GM12878 (cell line): ENCODE measurements at regions of chr6 and their contacts with region 1.

Region 1: DNA sequence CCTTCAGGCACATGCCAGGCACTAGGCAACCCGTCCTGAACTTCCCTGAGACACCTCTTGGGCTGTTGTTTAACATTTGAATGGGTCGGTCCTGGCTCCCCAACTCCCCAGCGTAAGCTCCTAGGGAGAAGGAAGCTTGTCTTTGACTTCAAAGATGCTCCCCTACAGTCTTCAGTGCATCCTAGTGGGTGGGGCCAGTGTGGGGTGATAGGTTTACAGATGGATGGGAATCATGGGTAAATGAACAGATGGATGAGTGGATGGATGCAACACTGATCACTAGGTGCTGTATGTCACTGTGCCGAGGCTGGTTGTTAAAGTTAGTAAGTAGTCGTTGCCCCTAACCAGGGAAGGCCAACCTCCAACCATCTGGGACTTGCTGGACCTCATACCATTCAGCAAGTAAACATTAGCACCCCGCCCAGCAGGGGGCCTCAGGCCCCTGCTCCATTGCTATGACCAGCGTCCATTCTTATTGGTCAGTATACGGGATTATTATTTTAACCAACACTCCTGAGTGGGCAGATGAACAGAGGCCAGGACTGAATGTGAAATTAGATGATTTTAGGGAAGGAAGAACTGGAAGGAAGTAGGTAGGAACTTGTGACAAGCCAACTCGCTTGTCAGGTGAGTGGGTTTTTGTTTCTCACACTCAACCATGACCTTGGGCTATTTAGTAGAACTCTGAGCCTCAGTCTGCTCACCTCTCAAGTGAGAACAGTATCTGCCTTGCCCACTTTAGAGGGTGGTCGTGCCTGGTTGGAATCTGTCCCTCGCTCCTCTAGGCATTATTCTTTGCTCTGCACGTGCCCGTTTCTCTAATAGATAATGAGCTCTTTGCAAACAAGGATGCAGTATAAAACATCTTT is 82.9 kb upstream of the FOXP4 start:
- DNase-seq: no peak
- ATAC-seq: peak; percentile 99
- H3K4me3 ChIP-seq: no peak overlapping the region
- H3K27ac ChIP-seq: no peak overlapping the region
- H3K4me1 ChIP-seq: no peaks in the 10 kb centered on the region
- H3K27me3 ChIP-seq: peaks cover 0 to 3% of the 10 kb centered on the region in 2 experiments; a peak in 1 of 4 replicates
- CTCF ChIP-seq: peak; percentile 74 to 82 (median 81)
- EP300 ChIP-seq: no peak
- POLR2A ChIP-seq: no peak
- RAD21 ChIP-seq: peak; percentile 96

Region 2: DNA sequence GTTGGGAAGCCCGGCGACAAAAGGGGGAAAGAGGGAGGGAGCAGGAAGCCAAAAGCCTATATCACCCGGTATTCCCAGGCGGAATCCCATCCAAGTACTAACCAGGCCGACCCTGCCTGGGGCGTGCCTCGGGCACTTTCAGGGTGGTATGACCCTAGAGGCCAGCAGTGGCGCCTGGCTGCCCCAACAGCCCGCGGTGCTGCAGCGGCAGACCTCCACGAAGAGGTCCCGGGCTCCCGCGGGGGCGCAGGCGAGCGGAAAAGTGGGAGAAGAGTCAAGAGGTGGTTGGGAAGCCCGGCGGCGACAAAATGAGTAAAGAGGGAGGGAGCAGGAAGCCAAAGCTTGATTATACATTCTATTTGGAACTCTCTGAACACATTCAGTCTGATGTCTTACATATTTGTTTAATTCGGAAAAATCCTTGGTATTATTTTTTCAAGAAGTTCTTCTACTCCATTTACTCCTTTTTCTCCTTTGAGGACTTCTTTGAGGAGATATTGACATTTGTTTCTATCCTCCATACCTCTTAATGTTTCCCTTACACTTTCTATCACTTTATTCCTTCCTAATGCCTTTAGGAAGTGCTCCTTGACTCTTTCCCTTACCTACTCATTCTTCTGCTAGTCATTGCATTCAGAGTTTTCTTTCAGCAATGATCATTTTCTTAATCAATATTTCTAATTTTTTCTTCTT is 223.7 kb before region 1 on chr6:
- CTCF ChIA-PET with region 1: no interaction called
- POLR2A ChIA-PET with region 1: no interaction called
- RAD21 ChIA-PET with region 1: no interaction called
- SMC1A ChIA-PET with region 1: no interaction called
- in situ Hi-C with region 1: no loop called
- intact Hi-C with region 1: no loop called
- DNase-seq: no peak
- ATAC-seq: no peak
- H3K4me3 ChIP-seq: no peak overlapping the region
- H3K27ac ChIP-seq: no peak overlapping the region
- H3K4me1 ChIP-seq: no peaks in the 10 kb centered on the region
- H3K27me3 ChIP-seq: peaks cover 2 to 4% of the 10 kb centered on the region in 2 experiments; a peak in 3 of 4 replicates
- CTCF ChIP-seq: no peak
- EP300 ChIP-seq: no peak
- POLR2A ChIP-seq: no peak
- RAD21 ChIP-seq: no peak

Region 3: DNA sequence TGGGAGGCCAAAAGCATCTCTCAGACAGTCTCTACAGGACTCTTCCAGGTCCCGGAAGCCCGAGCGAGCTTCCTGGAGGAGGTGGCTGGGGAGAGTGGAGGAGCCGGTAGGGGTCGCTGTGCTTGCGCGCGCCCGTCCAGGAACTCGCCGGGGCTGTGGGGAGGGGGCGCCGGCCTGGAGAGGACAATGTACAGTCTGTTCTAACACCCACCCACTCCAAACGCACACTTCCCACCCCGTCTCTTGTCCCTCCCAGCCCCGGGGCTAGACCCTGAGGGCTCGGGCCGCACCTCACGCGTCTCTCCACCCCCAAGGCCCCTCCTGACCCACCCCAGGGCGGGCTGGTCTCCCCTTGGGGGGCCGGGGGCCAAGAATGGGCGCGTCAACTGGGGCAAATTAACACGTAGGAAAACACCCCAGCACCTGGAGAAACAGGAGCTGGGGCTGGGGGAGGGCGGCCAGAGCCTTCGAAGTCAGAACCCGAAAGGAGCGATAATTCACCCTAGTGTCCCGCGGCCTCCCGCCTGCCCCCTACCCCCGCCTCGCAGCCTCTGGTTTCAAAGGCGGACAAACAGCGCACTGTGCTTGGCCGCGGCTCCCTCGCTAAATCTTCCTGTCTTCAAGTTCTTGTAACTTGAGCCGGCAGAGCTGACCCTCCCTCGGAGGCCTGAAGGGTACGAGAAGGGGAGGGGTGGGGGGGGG is 20.3 kb before region 1 on chr6:
- CTCF ChIA-PET with region 1: interaction called, 17 read pairs
- POLR2A ChIA-PET with region 1: no interaction called
- RAD21 ChIA-PET with region 1: interaction called, 4 read pairs
- SMC1A ChIA-PET with region 1: interaction called, 5 read pairs
- in situ Hi-C with region 1: no loop called
- intact Hi-C with region 1: no loop called
- DNase-seq: no peak
- ATAC-seq: no peak
- H3K4me3 ChIP-seq: no peak overlapping the region
- H3K27ac ChIP-seq: no peak overlapping the region
- H3K4me1 ChIP-seq: peaks cover 20% of the 10 kb centered on the region
- H3K27me3 ChIP-seq: no peaks in the 10 kb centered on the region; a peak in 2 of 4 replicates
- CTCF ChIP-seq: peak in 2 of 3 experiments; percentile 27 to 28; a peak in 1 of 6 replicates
- EP300 ChIP-seq: no peak
- POLR2A ChIP-seq: no peak
- RAD21 ChIP-seq: no peak

Region 4: GRCh38 chr6:41505122-41506049 is 42.1 kb after region 1 on chr6:
- CTCF ChIA-PET with region 1: interaction called, 5 read pairs
- POLR2A ChIA-PET with region 1: interaction called, 12 read pairs
- RAD21 ChIA-PET with region 1: interaction called, 4 read pairs
- SMC1A ChIA-PET with region 1: interaction called, 8 read pairs
- in situ Hi-C with region 1: no loop called
- intact Hi-C with region 1: no loop called
- DNase-seq: no peak
- ATAC-seq: peak; percentile 90
- H3K4me3 ChIP-seq: peak overlapping the region; percentile 41; the same call in 1 of the 2 replicates
- H3K27ac ChIP-seq: no peak overlapping the region
- H3K4me1 ChIP-seq: peaks cover 24% of the 10 kb centered on the region
- H3K27me3 ChIP-seq: peaks cover 3 to 5% of the 10 kb centered on the region in 2 experiments
- CTCF ChIP-seq: no peak
- EP300 ChIP-seq: no peak
- POLR2A ChIP-seq: no peak
- RAD21 ChIP-seq: no peak

Region 5: DNA sequence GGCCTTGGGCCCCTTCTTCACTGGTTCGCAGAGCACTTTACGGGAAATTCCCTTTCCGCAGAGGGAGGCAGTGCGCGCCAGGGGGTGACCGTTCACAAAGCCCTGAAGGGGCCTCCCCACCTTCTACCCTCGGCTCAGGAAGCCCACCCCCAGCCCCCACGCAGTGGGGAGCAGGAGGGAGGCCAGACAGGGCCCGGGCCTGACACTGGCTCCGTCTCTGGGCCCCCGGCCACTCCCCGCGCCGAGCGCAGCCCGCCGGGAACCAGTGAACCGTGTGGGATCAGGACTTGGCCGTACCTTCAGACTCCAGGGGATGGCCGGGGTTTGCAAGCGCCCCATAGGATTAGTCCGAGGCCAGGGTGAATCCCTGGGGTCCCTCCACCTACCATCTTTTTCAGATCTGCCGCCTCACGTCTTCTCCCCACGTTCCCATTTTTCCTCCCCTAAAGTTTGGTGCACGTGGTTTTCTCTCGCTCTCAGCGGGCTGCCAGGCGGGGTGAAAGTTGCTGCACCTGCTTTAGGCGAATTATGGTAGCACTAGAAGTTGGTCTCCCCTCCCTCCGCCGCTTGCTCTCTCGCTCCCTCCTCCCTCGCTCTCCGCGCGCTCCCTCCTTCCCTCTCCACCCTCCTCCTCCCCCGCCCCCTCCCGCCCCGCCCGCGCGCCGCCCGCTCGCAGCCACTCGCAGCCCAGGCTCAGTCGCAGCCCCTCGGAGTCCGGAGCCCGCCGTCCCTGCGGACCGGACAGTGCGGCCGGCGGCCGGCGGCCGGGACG is 82.6 kb after region 1 on chr6 and contains the start of gene FOXP4:
- CTCF ChIA-PET with region 1: interaction called, 9 read pairs
- POLR2A ChIA-PET with region 1: no interaction called
- RAD21 ChIA-PET with region 1: interaction called, 16 read pairs
- SMC1A ChIA-PET with region 1: interaction called, 7 read pairs
- in situ Hi-C with region 1: no loop called
- intact Hi-C with region 1: loop called (anchors 5 kb)
- DNase-seq: peak; percentile 73
- ATAC-seq: peak; percentile 85
- H3K4me3 ChIP-seq: peak within 1 kb of the TSS; percentile 91
- H3K27ac ChIP-seq: peak within 1 kb of the TSS; percentile 74
- H3K4me1 ChIP-seq: peaks cover 16% of the 10 kb centered on the region
- H3K27me3 ChIP-seq: no peaks in the 10 kb centered on the region
- CTCF ChIP-seq: no peak
- EP300 ChIP-seq: no peak
- POLR2A ChIP-seq: peak; percentile 65
- RAD21 ChIP-seq: 0 out of 2 replicates have a peak, but pooled peaks have one; percentile 0
- polyA plus RNA-seq, gene FOXP4: 0.31 to 0.40 TPM

Region 6: GRCh38 chr6:41591859-41592502 is 128.7 kb after region 1 on chr6:
- CTCF ChIA-PET with region 1: interaction called, 117 read pairs
- POLR2A ChIA-PET with region 1: interaction called, 7 read pairs
- RAD21 ChIA-PET with region 1: interaction called, 57 read pairs
- SMC1A ChIA-PET with region 1: interaction called, 36 read pairs
- in situ Hi-C with region 1: loop called (anchors 5 kb)
- intact Hi-C with region 1: loop called (anchors 1 kb)
- DNase-seq: peak; percentile 9
- ATAC-seq: peak; percentile 92
- H3K4me3 ChIP-seq: no peak overlapping the region
- H3K27ac ChIP-seq: no peak overlapping the region
- H3K4me1 ChIP-seq: no peaks in the 10 kb centered on the region
- H3K27me3 ChIP-seq: no peaks in the 10 kb centered on the region
- CTCF ChIP-seq: peak; percentile 86 to 96 (median 94); a peak in 5 of 6 replicates
- EP300 ChIP-seq: no peak
- POLR2A ChIP-seq: 0 out of 2 replicates have a peak, but pooled peaks have one; percentile 11
- RAD21 ChIP-seq: peak; percentile 96

Region 7: DNA sequence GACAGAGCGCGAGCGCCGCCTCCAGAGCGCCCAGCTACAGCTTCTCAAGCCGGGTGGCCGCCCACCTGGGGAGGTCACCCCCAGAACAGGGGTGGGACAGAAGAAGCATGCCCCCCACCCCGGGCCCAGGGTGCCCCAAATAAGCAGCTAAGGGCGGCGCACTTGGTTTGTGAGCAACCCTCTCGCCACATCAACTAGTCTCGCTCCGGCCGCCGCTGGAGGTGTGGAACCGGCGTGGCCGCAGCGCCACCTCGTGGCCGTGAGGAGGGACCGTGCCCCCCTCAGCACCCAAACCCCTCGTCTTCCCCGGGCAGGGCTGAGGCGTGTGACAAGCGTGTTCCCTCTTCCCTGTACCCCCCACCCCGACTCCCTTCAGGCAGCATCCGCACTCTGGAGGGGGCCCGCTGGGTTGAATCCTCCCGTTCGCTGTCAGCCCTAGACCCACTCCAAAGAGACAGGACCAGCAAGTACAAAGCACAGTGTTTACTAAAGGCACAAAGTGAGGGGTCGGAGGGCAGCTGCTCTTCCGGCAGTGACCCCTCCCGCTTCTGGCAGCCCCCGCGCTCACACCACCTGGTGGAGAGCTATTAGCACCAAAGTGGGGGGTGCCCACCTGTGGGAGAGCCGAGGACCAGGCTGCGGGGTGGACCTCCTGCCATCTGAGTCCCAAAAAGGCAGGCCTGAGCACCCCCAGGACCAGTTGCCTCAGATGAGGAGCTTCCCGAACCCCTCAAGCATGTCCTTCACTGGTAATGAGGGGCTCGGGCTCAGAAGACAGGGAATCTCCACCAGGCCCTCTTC is 220.4 kb after region 1 on chr6:
- CTCF ChIA-PET with region 1: interaction called, 10 read pairs
- POLR2A ChIA-PET with region 1: no interaction called
- RAD21 ChIA-PET with region 1: interaction called, 3 read pairs
- SMC1A ChIA-PET with region 1: no interaction called
- in situ Hi-C with region 1: no loop called
- intact Hi-C with region 1: loop called (anchors 2 kb)
- DNase-seq: no peak
- ATAC-seq: peak; percentile 93
- H3K4me3 ChIP-seq: no peak overlapping the region
- H3K27ac ChIP-seq: no peak overlapping the region
- H3K4me1 ChIP-seq: no peaks in the 10 kb centered on the region
- H3K27me3 ChIP-seq: no peaks in the 10 kb centered on the region
- CTCF ChIP-seq: peak; percentile 85 to 93 (median 92)
- EP300 ChIP-seq: no peak
- POLR2A ChIP-seq: peak; percentile 73
- RAD21 ChIP-seq: peak; percentile 72